ENCODE measurements at regions of chr7 and their contacts with region 1.

Region 1: GRCh38 chr7:2241580-2242540 is at the starts of genes MRM2 and NUDT1:
- DNase-seq: peak; percentile 77 to 86
- ATAC-seq: peak; percentile 88 to 94 (median 92)
- H3K4me3 ChIP-seq: peak within 1 kb of the TSS; percentile 86 to 99 (median 96)
- H3K27ac ChIP-seq: peak within 1 kb of the TSS in 9 of 10 donors; percentile 61 to 89 (median 77)
- H3K4me1 ChIP-seq: peaks cover 0 to 52% (median 20%) of the 10 kb centered on the region in 9 donors
- H3K27me3 ChIP-seq: no peaks in the 10 kb centered on the region
- CTCF ChIP-seq: no peak
- total RNA-seq, gene MRM2: 16.5 to 22.2 (median 19.6) TPM
- total RNA-seq, gene NUDT1: 7.7 to 15.8 (median 11.9) TPM

Region 2: DNA sequence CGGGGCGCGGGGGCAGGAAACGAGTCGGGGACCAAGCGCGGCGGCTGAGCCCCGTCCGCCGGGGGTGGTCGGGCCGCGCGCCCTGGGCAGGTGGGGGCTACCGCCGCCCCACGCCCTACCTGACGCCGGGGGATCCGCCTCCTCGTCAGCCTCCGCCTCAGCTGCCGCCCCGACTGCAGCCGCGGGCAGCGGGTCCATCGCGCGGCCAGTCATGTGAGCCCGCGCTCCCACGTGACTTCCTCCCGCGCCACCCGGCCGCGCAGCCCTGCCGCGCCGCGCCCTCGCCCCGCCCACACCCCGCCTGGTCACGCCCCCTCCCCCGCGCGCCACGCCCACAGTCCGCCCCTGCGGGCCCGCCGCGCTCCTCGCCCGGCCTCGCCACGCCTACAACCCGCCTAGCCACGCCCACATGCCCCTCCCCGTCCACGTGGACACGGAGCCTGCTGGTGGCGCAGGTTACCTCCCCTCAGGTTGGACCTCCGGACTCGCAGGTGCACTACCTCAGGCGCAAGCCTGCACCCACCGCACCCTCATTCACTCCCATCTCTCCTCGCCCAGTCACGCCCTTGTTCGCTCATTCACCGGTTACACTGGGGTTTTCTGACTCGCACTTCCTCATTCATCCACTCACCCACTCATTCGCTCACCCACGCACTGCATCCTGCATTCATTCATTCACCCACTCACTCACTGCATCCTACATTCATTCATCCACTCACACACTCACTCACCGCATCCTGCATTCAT is 72.5 kb after region 1 on chr7 and contains the start of gene SNX8:
- intact Hi-C with region 1: loop called in 1 of 10 experiments (anchors 10 kb)
- DNase-seq: peak; percentile 89 to 95
- ATAC-seq: peak; percentile 97 to 99 (median 98)
- H3K4me3 ChIP-seq: peak within 1 kb of the TSS; percentile 83 to 100 (median 92)
- H3K27ac ChIP-seq: peak within 1 kb of the TSS in 9 of 10 donors; percentile 60 to 91 (median 78)
- H3K4me1 ChIP-seq: peaks cover 0 to 44% (median 9%) of the 10 kb centered on the region in 9 donors
- H3K27me3 ChIP-seq: no peaks in the 10 kb centered on the region
- CTCF ChIP-seq: no peak
- total RNA-seq, gene SNX8: 15.6 to 31.8 (median 21.6) TPM

Measured in heart right ventricle (tissue), 16 donors.